Lower leg skin (tissue), 4 donors: ENCODE measurements at regions of chr19 and their contacts with region 1.

Region 1: DNA sequence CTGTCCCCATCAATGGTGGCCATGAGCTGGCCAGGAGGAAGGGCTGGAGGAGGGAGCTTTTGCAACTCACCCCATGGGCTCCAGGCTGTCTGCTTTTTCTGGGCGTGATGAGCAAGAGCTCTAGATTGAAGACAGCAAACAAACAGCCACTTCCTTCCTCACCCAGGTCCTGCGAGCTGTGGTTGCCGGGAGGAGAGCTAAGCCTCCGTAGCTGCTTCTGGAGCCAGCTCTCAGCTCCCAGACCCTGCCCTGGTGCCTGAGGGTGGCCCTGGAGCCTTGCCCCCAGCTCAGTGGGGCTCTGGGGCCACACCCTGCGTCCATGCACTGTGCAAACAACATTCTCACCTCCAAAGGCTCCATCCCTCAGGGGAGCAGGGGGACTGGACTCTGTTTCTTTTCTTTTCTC is 6.2 kb downstream of the MYO1F start:
- DNase-seq: no peak
- H3K4me3 ChIP-seq: no peak overlapping the region
- CTCF ChIP-seq: no peak
- POLR2A ChIP-seq: no peak

Region 2: GRCh38 chr19:8416796-8417195 is 154.2 kb before region 1 on chr19:
- intact Hi-C with region 1: loop called (anchors 5 kb)
- DNase-seq: no peak
- H3K4me3 ChIP-seq: no peak overlapping the region
- CTCF ChIP-seq: no peak
- POLR2A ChIP-seq: no peak